ENCODE measurements at regions of chr21 and their contacts with region 1.

Region 1: DNA sequence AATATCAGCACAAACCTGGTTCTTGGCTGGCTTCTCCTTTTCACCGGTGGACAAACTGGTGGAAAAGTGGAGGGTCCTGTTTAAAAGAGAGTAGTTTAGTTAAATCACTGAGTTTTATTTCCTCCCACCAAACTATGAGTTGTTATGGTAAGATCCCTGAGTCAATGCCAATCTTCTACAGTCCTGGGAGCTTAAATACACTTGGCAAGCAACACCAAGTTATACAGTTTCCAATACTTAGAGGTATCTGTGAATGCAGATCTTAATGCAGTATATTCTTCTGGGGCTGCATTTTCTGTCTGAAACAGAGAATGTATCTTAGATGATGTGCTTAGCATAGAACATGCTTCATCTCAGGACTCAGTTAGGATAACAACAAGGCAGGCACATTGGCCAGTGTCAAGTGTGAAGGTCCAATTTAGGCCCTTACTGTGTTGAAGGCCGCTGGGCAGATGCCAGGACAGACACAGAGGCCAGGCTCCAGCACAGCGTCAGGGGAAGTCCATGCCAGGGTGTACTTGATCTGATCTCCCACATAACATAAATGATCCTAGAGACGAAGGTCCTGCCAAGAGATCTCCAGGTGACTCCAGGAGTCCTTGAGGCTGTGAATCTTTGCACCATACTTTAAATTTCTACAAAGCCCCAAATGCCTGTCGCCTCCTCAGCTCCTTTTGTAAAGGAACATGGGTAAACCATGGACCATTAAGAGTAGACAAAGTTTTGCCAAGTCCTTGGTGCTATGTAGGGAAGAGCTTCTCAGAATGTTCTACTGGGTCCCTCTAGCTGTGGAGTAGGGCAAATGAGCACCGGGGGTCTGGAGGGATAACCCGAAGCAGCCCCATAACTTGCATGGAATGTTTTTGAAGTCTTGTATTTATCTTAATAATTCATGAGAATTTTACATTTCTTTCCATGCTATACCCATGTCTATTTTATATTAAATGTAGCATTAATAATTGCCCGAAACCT is 76.8 kb downstream of the KCNJ15 start:
- DNase-seq: peak in 1 of 9 experiments; percentile 25
- ATAC-seq: no peak
- H3K4me3 ChIP-seq: no peak overlapping the region
- H3K4me3 Mint-ChIP-seq: no peak overlapping the region
- H3K27ac ChIP-seq: no peak overlapping the region
- H3K27ac Mint-ChIP-seq: no peak overlapping the region
- H3K4me1 ChIP-seq: no peaks in the 10 kb centered on the region
- H3K4me1 Mint-ChIP-seq: no peaks in the 10 kb centered on the region
- H3K27me3 ChIP-seq: no peaks in the 10 kb centered on the region
- H3K27me3 Mint-ChIP-seq: no peaks in the 10 kb centered on the region
- CTCF ChIP-seq: no peak

Region 2: DNA sequence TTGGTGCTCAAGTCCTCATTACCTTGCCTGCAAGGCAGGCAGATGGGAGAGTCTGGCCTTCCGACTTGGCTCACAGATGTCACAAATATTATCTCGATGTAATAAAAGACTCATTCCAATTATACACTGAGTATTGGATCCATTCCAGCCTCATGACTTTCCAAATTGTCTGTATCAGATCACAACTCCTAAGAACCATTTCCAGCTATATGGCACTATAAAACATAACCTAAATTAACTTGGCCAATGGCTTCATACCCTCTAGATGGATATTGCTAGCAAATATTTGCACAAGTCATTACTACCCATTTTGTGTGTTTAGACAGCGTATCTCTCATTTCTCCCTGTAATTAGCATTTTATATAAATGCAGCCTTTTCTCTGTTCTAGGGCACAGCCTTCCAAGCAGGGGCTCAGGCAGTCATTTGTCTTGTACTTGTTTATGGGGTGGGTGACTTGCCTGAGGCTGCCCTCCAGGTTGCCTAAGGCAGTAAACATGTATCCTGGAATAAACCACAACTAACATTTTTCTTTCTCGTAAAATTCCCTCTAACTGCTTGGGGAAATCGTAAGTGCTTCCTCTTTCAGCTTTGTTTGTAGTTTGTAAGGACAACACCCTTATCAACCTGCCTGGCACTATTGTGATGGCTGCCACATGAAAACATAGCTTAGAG is 346.7 kb before region 1 on chr21:
- CTCF ChIA-PET with region 1: no interaction called
- POLR2A ChIA-PET with region 1: no interaction called
- intact Hi-C with region 1: no loop called
- DNase-seq: no peak
- ATAC-seq: no peak
- H3K4me3 ChIP-seq: no peak overlapping the region
- H3K4me3 Mint-ChIP-seq: no peak overlapping the region
- H3K27ac ChIP-seq: no peak overlapping the region
- H3K27ac Mint-ChIP-seq: no peak overlapping the region
- H3K4me1 ChIP-seq: no peaks in the 10 kb centered on the region
- H3K4me1 Mint-ChIP-seq: no peaks in the 10 kb centered on the region
- H3K27me3 ChIP-seq: no peaks in the 10 kb centered on the region
- H3K27me3 Mint-ChIP-seq: peaks cover 15% of the 10 kb centered on the region
- CTCF ChIP-seq: no peak

Region 3: GRCh38 chr21:38297194-38297631 is 36.4 kb before region 1 on chr21:
- CTCF ChIA-PET with region 1: no interaction called
- POLR2A ChIA-PET with region 1: no interaction called
- intact Hi-C with region 1: loop called in 1 of 2 experiments (anchors 5 kb)
- DNase-seq: no peak
- ATAC-seq: no peak
- H3K4me3 ChIP-seq: no peak overlapping the region
- H3K4me3 Mint-ChIP-seq: no peak overlapping the region
- H3K27ac ChIP-seq: no peak overlapping the region
- H3K27ac Mint-ChIP-seq: peak overlapping the region; percentile 52
- H3K4me1 ChIP-seq: peaks cover 15% of the 10 kb centered on the region
- H3K4me1 Mint-ChIP-seq: peaks cover 40% of the 10 kb centered on the region
- H3K27me3 ChIP-seq: no peaks in the 10 kb centered on the region
- H3K27me3 Mint-ChIP-seq: no peaks in the 10 kb centered on the region
- CTCF ChIP-seq: no peak